GM10248 (cell line): ENCODE measurements at regions of chr9 and their contacts with region 1.

Region 1: GRCh38 chr9:127214421-127215267 is 49.9 kb upstream of the GARNL3 start:
- DNase-seq: peak; percentile 82
- CTCF ChIP-seq: peak; percentile 74

Region 2: GRCh38 chr9:127244609-127245601 is 30.3 kb after region 1 on chr9:
- CTCF ChIA-PET with region 1: no interaction called
- POLR2A ChIA-PET with region 1: no interaction called
- DNase-seq: peak; percentile 98
- CTCF ChIP-seq: no peak

Region 3: DNA sequence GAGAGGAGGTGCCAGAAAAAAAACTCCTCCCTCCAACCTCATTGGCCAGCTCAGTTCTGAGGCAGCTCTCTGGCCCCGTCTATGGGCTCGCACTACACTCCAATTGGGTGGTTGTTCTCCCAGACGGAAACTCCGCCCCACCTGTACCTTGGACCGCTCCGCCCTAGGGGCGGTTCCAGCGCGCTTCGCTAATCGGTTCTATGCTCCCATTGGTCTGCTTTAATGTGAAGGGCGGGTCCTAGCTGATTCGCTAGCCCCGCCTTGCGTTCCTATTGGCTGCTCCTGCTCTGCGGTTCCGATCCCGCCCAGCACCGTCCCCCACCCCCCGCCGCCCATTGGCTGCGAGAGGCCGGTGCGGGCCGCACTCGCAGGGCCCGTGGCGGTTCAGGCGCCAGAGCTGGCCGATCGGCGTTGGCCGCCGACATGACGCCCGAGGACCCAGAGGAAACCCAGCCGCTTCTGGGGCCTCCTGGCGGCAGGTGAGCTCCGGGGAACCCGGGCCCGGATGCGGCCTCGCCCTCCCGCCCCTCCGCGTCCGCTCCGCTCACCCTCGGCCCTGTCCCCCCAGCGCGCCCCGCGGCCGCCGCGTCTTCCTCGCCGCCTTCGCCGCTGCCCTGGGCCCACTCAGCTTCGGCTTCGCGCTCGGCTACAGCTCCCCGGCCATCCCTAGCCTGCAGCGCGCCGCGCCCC is 182.3 kb after region 1 on chr9 and contains the start of gene SLC2A8:
- CTCF ChIA-PET with region 1: interaction called, 11 read pairs
- POLR2A ChIA-PET with region 1: no interaction called
- DNase-seq: peak; percentile 97
- CTCF ChIP-seq: no peak